Common myeloid progenitor, CD34-positive (primary cell): ENCODE measurements at regions of chr16 and their contacts with region 1.

Region 1: GRCh38 chr16:20826039-20826566 is 19.8 kb downstream of the REXO5 start:
- DNase-seq: peak; percentile 25 to 78 (median 59)
- H3K4me3 ChIP-seq: no peak overlapping the region
- H3K27ac ChIP-seq: peak overlapping the region in 1 of 2 experiments; percentile 67
- H3K4me1 ChIP-seq: peaks cover 17 to 35% (median 25%) of the 10 kb centered on the region in 4 experiments
- H3K27me3 ChIP-seq: no peaks in the 10 kb centered on the region

Region 2: GRCh38 chr16:20806168-20807050 is 19.7 kb before region 1 on chr16 and contains the starts of genes ERI2 and REXO5:
- CTCF ChIA-PET with region 1: interaction called, 13 read pairs
- POLR2A ChIA-PET with region 1: no interaction called
- DNase-seq: peak; percentile 90 to 95 (median 92)
- H3K4me3 ChIP-seq: peak within 1 kb of the TSS; percentile 81 to 97 (median 86)
- H3K27ac ChIP-seq: peak within 1 kb of the TSS; percentile 84 to 93
- H3K4me1 ChIP-seq: peaks cover 0 to 48% (median 42%) of the 10 kb centered on the region in 4 experiments
- H3K27me3 ChIP-seq: no peaks in the 10 kb centered on the region

Region 3: GRCh38 chr16:20814784-20815183 is 11.3 kb before region 1 on chr16:
- CTCF ChIA-PET with region 1: interaction called, 18 read pairs
- POLR2A ChIA-PET with region 1: no interaction called
- DNase-seq: peak; percentile 67 to 96 (median 94)
- H3K4me3 ChIP-seq: peak overlapping the region in 2 of 7 experiments; percentile 43
- H3K27ac ChIP-seq: peak overlapping the region in 1 of 2 experiments; percentile 23
- H3K4me1 ChIP-seq: peaks cover 8 to 58% (median 30%) of the 10 kb centered on the region in 4 experiments
- H3K27me3 ChIP-seq: no peaks in the 10 kb centered on the region